ENCODE measurements at regions of chr22 and their contacts with region 1.

Region 1: DNA sequence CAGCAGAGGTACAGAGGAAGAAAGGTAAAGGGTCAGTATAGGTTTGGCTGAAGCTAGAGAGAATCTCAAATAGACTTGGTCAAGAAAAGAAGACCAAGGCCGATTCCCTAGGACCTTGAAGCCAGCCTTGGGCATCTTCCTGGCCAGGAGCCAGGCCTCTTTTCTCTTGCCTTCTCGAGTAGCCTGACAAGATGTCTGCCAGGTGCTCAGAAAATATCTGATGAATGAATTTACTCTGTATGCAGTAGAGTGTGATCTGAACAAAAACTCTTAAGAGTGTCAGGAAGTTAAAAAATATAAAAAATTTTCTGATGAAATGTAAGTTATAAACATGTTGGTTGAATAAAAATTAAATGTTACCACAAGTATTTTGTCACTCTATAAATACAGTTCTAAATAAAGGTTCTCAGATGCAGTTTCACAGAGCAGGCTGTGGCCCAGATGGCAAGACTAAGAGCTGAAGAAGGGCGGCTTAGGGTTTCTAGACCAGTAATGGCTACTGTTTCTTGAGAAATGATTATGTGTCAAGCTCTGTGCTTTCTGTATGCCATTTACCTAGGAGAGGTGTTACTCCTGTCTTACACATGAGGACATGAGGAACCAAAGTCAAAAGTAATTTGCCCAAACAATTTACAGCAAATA is 98.1 kb downstream of the ATXN10 start:
- DNase-seq: no peak
- CTCF ChIP-seq: no peak

Region 2: DNA sequence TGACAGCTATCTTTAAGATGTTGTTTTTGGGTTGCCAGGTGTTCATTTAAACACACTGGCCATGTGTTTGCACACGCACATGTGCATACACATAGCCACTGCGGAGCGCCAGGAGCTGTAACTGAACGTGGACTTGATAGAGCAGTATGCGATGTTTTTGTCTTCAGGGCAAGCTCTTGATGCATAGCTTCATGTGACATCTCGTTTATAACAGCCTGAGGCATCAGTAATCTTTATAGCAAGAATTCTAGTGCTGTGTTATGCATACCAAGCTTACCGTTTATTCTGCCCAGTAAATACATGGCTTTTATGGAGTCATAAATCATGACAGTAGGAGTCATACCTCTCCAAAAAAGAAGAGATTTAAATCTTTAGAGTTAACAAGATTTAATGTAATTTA is 11.1 kb before region 1 on chr22:
- CTCF ChIA-PET with region 1: interaction called, 10 read pairs
- POLR2A ChIA-PET with region 1: no interaction called
- DNase-seq: no peak
- CTCF ChIP-seq: no peak

Region 3: GRCh38 chr22:45785458-45785857 is 15.8 kb after region 1 on chr22:
- CTCF ChIA-PET with region 1: interaction called, 13 read pairs
- POLR2A ChIA-PET with region 1: interaction called, 4 read pairs
- DNase-seq: peak; percentile 35
- CTCF ChIP-seq: no peak

Region 4: GRCh38 chr22:45804986-45805325 is 35.3 kb after region 1 on chr22:
- CTCF ChIA-PET with region 1: no interaction called
- POLR2A ChIA-PET with region 1: no interaction called
- DNase-seq: no peak
- CTCF ChIP-seq: no peak

Region 5: DNA sequence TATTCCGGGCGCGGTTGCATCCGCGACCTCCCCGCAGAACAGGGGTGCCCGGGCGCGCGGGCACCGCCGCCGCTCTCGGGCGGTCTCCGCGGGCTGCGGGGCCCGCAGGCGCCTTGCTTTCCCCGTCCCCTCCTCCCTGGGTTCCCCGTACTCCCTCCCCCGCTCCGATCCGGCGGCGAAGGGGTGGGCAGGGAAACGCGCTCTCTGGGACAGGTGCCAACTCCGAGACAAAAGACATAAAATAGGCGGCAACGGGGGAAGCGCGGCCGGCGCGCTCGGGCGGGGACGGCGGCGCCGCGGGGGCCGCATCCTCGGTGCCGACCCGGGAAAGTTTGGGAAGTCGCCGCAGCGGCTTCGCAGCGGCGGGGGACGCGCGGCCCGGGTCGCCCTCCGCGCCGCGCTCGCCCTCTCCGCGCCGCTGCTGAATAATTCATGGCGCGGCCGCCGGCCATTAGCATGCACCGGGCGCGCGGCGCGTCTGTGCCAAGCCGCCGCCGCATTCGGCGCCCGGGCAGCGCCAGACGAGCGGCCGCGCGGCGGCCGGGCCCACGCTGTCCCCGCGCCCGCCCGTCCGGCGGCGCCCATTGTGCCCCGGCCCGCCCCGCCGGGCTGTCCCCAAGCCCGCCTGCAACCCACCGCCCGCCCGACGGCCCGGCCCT is 301.9 kb after region 1 on chr22:
- CTCF ChIA-PET with region 1: no interaction called
- POLR2A ChIA-PET with region 1: no interaction called
- DNase-seq: no peak
- CTCF ChIP-seq: no peak